ENCODE measurements at regions of chr3 and their contacts with region 1.

Region 1: DNA sequence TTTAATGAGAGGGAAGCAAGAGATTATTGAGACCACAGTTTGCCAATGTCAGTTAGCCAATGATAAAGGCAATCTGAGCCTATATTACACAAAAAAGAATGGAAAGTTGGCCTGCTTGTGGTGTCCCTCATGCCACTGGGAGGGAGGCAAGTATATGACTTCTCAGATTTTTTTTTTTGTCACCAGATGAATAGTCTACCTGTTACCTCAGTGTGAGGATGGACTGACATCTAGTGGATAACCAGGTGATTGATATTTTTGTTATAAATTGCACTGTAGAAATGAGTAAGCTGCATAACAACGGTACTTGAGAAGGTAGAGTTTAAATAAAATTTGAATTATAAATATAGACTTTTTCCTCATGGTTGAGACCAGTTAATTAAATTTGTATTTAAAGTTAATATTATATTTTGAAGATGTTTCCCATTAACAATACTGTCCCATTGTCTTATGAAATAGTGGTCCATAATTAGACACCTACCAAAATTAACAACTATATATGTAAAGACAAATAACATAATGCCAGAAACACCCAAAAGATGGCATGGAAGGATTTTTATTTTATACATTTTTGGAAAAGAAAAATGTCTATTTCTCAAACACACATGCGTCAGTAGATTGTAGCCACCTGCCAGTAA is 237.8 kb upstream of the GADL1 start:
- DNase-seq: peak in 3 of 14 experiments; percentile 48 to 63 (median 58)
- ATAC-seq: no peak
- H3K4me3 ChIP-seq: no peak overlapping the region
- H3K4me3 Mint-ChIP-seq: no peak overlapping the region
- H3K27ac ChIP-seq: no peak overlapping the region
- H3K27ac Mint-ChIP-seq: no peak overlapping the region
- H3K4me1 ChIP-seq: no peaks in the 10 kb centered on the region
- H3K4me1 Mint-ChIP-seq: no peaks in the 10 kb centered on the region
- H3K27me3 ChIP-seq: no peaks in the 10 kb centered on the region
- H3K27me3 Mint-ChIP-seq: no peaks in the 10 kb centered on the region
- CTCF ChIP-seq: peak; percentile 52

Region 2: GRCh38 chr3:30012941-30013543 is 1119.2 kb before region 1 on chr3:
- CTCF ChIA-PET with region 1: no interaction called
- POLR2A ChIA-PET with region 1: no interaction called
- intact Hi-C with region 1: loop called in 1 of 2 experiments (anchors 5 kb)
- DNase-seq: peak in 13 of 14 experiments; percentile 2 to 67 (median 31)
- ATAC-seq: peak; percentile 48
- H3K4me3 ChIP-seq: no peak overlapping the region
- H3K4me3 Mint-ChIP-seq: no peak overlapping the region
- H3K27ac ChIP-seq: no peak overlapping the region
- H3K27ac Mint-ChIP-seq: no peak overlapping the region
- H3K4me1 ChIP-seq: no peaks in the 10 kb centered on the region
- H3K4me1 Mint-ChIP-seq: no peaks in the 10 kb centered on the region
- H3K27me3 ChIP-seq: no peaks in the 10 kb centered on the region
- H3K27me3 Mint-ChIP-seq: no peaks in the 10 kb centered on the region
- CTCF ChIP-seq: peak; percentile 65

Region 3: DNA sequence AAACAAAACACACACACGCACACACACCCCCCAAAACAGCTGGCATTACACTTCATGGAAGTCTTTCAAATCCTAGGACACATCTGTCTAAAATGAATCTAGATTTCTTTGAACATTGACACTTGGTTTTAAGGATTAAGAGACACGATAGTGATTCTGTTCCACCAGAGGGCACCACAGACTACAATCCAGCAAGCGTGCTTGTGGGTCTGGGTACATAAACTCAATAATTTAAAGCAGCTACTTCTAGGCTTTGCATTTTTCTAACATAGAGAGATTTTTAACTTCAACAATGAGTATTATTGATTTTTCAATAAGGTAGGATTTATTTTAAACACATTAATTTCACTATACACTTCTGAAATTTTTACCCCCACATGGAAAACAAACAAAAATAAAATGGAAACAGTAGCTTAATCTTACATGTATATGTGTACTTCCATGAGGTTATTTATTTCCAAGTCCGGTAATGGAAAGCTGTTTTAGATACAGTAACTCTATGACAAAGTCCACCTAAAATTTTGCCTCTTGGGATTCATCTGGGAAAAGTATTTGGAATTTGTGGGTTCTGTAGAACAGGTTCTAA is 1089.9 kb before region 1 on chr3:
- CTCF ChIA-PET with region 1: no interaction called
- POLR2A ChIA-PET with region 1: no interaction called
- intact Hi-C with region 1: loop called (anchors 1 to 5 kb)
- DNase-seq: peak; percentile 24 to 76 (median 48)
- ATAC-seq: peak; percentile 66
- H3K4me3 ChIP-seq: no peak overlapping the region
- H3K4me3 Mint-ChIP-seq: no peak overlapping the region
- H3K27ac ChIP-seq: no peak overlapping the region
- H3K27ac Mint-ChIP-seq: no peak overlapping the region
- H3K4me1 ChIP-seq: no peaks in the 10 kb centered on the region
- H3K4me1 Mint-ChIP-seq: peaks cover 6% of the 10 kb centered on the region
- H3K27me3 ChIP-seq: peaks cover 0 to 4% of the 10 kb centered on the region in 2 experiments
- H3K27me3 Mint-ChIP-seq: peaks cover 36% of the 10 kb centered on the region
- CTCF ChIP-seq: peak; percentile 69

Region 4: GRCh38 chr3:30768703-30769685 is 363.3 kb before region 1 on chr3:
- CTCF ChIA-PET with region 1: interaction called, 4 read pairs
- POLR2A ChIA-PET with region 1: no interaction called
- intact Hi-C with region 1: loop called (anchors 5 kb)
- DNase-seq: peak; percentile 49 to 78 (median 64)
- ATAC-seq: peak; percentile 60
- H3K4me3 ChIP-seq: no peak overlapping the region
- H3K4me3 Mint-ChIP-seq: no peak overlapping the region
- H3K27ac ChIP-seq: no peak overlapping the region
- H3K27ac Mint-ChIP-seq: no peak overlapping the region
- H3K4me1 ChIP-seq: no peaks in the 10 kb centered on the region
- H3K4me1 Mint-ChIP-seq: peaks cover 5% of the 10 kb centered on the region
- H3K27me3 ChIP-seq: no peaks in the 10 kb centered on the region
- H3K27me3 Mint-ChIP-seq: peaks cover 9% of the 10 kb centered on the region
- CTCF ChIP-seq: peak; percentile 83

Region 5: GRCh38 chr3:31288641-31289100 is 156.4 kb after region 1 on chr3:
- CTCF ChIA-PET with region 1: no interaction called
- POLR2A ChIA-PET with region 1: no interaction called
- intact Hi-C with region 1: no loop called
- DNase-seq: peak in 3 of 14 experiments; percentile 7 to 26 (median 25)
- ATAC-seq: no peak
- H3K4me3 ChIP-seq: no peak overlapping the region
- H3K4me3 Mint-ChIP-seq: no peak overlapping the region
- H3K27ac ChIP-seq: no peak overlapping the region
- H3K27ac Mint-ChIP-seq: no peak overlapping the region
- H3K4me1 ChIP-seq: peaks cover 19% of the 10 kb centered on the region
- H3K4me1 Mint-ChIP-seq: peaks cover 18% of the 10 kb centered on the region
- H3K27me3 ChIP-seq: no peaks in the 10 kb centered on the region
- H3K27me3 Mint-ChIP-seq: no peaks in the 10 kb centered on the region
- CTCF ChIP-seq: no peak

Measured in CD4-positive, alpha-beta T cell (primary cell).